ENCODE measurements at regions of chr1 and their contacts with region 1.

Region 1: GRCh38 chr1:153510984-153511410 is 24.8 kb downstream of the S100A6 start:
- DNase-seq: peak; percentile 91
- ATAC-seq: peak; percentile 55

Region 2: DNA sequence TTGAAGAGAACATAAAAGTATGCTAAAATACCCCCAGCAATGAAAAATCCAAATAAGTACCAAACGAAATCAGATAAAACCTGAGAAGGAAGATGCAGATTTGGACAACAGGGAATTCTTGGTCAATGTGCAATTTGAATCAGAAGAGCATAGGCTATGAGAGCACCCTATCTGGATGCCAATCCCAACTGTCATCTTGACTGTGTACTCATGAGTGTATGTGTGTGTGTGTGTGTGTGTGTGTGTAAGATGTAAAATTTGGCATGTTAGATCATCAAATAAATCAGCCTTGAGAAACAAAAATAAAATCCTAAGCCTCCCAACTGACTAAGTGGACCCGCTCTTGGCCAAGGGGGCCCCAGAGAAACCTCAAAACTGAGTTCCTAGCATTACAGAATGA is 342.3 kb before region 1 on chr1:
- intact Hi-C with region 1: no loop called
- DNase-seq: no peak
- ATAC-seq: no peak

Region 3: DNA sequence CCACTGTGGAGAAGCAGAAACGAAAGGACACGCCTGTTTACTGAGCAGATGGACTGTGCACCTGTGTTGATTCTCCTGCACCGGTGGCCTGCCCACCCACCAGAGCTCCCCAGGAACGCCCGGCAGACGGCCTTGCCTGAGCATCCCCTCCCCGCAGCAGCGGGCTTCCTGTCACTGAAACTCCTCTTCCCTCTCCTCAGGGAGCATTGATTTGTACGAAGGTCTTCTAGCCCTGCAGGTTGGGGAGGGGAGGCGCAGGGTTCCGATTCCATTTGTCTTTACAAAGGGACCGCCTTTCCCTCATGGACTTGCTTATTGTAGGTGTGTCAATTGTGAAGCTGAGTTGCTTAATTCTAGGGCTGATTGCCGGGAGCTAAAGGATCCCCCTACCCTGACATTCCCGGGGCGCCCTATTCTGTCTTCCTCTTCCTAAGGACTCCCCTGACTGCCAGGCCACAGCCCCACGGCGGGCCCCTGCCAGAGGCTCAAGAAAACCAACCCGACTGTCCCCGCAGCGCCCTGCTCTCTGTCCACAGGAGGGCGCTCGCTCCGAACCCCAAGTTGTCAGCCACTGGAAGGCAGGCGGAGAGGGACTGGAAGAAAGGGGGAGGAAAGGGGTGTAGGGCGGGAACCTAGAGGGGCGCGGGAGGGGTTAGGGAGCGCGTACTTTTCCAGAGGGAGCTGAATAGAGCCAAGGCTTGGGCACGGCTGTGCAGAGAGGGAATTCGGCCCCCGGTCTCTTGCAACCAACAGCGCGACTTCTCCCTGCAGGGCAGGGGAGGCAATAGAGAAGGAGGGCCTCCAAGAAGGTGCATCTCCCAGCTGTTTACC is 22.0 kb after region 1 on chr1:
- intact Hi-C with region 1: loop called (anchors 2 kb)
- DNase-seq: peak; percentile 92
- ATAC-seq: peak; percentile 62

Region 4: DNA sequence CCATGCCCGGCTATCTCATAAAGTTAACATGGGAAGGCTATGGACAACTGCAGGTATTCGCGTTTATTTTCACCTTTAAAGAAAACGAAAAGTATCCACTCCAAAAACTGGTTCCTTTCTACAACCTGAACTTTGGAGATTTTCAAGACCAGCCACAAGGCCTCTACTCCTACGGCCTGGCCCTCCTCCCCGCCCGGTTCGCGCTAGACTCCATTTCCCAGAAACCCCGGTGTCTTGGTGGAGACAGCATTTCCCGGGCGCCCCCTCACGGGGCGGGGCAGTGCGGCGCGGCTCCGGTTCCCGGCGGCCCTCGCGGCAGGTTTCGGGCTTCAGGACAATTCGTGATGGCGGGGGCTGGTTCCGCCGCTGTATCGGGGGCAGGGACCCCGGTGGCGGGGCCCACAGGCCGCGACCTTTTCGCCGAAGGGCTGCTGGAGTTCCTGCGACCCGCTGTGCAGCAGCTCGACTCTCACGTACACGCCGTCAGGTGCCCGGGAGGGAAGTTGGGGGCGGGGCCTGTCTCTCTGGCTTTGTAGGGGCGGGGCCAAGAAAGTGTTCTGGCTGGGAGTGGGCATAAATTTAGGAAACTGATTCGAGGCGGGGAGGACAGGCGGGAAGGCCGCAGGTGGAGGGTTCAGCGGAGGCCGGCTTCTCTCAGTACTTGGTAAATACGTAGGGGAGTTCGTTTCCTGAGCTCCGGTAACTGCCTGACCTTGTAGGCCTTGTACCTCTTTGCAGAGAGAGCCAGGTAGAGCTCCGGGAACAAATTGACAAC is 147.6 kb after region 1 on chr1 and contains the start of gene SNAPIN:
- intact Hi-C with region 1: loop called (anchors 10 kb)
- DNase-seq: peak; percentile 95
- ATAC-seq: peak; percentile 99
- total RNA-seq, gene SNAPIN: 64.0 TPM

Region 5: DNA sequence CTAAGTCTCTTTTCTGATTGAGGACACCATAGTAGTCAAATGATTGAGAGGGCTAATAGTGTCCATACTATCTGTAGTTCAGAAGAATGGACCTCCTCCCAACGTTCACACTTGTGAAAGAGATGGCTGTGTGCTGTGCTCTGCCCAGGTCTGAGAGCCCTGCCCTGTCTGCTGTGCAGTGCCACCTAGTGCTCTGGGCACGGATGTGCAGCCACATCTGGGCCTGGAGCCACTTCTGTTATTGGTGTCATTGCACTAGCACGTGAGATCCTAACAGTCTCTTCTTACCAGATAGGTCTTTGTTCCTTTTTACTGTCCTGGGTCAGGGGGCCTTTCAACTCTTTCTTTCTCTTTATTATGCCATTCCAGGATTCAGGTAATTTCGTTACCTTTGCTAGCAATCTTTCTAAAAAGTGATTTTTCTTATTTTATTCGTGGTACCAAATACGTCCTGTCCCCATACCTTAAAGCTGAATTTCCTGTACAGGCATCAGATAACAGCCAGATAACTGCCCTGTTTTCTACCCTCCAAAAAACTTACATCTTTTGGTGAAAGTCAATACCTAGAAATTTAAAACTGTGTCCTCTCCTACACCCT is 238.5 kb after region 1 on chr1:
- intact Hi-C with region 1: loop called (anchors 2 kb)
- DNase-seq: peak; percentile 93
- ATAC-seq: peak; percentile 93

Region 6: GRCh38 chr1:153985941-153986761 is 475.2 kb after region 1 on chr1 and contains the start of gene RAB13:
- intact Hi-C with region 1: loop called (anchors 10 kb)
- DNase-seq: peak; percentile 88
- ATAC-seq: peak; percentile 87
- total RNA-seq, gene RAB13: 61.4 TPM

Measured in Right ventricle myocardium inferior (tissue), 1 donor.